ENCODE measurements at regions of chr4 and their contacts with region 1.

Region 1: GRCh38 chr4:2963175-2963965 is at the starts of genes GRK4 and NOP14:
- DNase-seq: peak; percentile 96 to 98
- ATAC-seq: peak; percentile 83 to 91
- H3K4me3 ChIP-seq: peak within 1 kb of the TSS; percentile 78 to 99 (median 86)
- H3K27ac ChIP-seq: peak within 1 kb of the TSS; percentile 91 to 95 (median 94)
- H3K4me1 ChIP-seq: peaks cover 25 to 28% of the 10 kb centered on the region in 2 donors
- H3K27me3 ChIP-seq: no peaks in the 10 kb centered on the region
- CTCF ChIP-seq: peak in 2 of 5 experiments; percentile 24 to 48
- POLR2A ChIP-seq: peak; percentile 85 to 87
- total RNA-seq, gene GRK4: 2.8 to 5.8 (median 3.7) TPM
- total RNA-seq, gene NOP14: 16.6 to 46.2 (median 36.2) TPM

Region 2: DNA sequence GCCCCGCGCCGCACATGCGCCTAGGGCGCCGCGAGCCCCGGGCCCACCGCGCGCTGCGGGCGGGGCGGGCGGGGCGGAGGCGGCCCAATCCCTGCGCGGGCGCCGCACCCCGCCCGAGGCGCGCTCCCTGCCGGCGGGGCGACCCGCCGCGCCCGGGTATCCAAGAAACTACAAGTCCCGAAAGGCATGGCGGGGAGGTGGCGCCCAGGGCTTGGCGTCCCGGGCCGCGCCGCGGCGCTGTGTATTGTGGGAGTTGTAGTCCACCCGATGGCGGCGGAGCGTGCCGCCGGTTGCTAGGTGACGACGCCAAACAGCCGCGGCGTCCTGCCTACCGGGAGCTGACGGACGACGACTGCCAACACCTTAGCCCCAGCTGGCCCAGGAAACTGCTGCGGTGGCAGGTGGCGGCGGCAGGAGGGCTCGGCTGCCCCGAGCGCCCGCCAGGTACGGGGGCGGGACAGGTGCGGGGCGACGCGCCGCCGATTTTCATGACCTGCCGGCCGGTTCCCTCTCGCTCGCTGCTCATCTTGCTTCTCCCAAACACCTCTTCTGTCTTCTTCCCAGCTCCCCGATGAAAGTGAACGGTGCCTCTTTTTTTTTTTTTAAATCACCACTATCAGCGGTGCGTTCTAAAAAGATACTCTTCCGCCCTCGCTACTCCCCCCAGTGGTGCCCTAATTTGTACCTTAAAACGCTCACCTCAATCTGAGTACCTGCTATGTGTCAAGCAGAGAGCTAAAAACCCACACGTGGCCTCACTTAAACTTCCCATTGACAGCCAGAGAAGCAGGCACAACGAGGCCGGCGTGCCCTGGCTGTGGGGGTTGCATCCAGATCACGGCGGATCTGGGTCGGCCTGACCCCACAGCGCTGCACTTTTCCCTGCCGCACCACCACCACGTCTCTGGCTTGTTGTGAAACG is 544.5 kb before region 1 on chr4 and contains the start of gene CFAP99:
- in situ Hi-C with region 1: loop called in 1 of 4 experiments (anchors 10 kb)
- intact Hi-C with region 1: loop called (anchors 1 kb)
- DNase-seq: peak; percentile 97 to 98
- ATAC-seq: peak; percentile 90 to 91
- H3K4me3 ChIP-seq: peak within 1 kb of the TSS; percentile 69 to 94 (median 77)
- H3K27ac ChIP-seq: peak within 1 kb of the TSS; percentile 47 to 79 (median 64)
- H3K4me1 ChIP-seq: peaks cover 16 to 26% of the 10 kb centered on the region in 2 donors
- H3K27me3 ChIP-seq: peaks cover 0 to 23% (median 15%) of the 10 kb centered on the region in 3 donors
- CTCF ChIP-seq: peak in 3 of 5 experiments; percentile 4 to 11 (median 5)
- POLR2A ChIP-seq: no peak
- total RNA-seq, gene CFAP99: not detected

Region 3: GRCh38 chr4:2608291-2608690 is 355.1 kb before region 1 on chr4:
- in situ Hi-C with region 1: no loop called
- intact Hi-C with region 1: no loop called
- DNase-seq: no peak
- ATAC-seq: no peak
- H3K4me3 ChIP-seq: no peak overlapping the region
- H3K27ac ChIP-seq: no peak overlapping the region
- H3K4me1 ChIP-seq: peaks cover 40 to 62% of the 10 kb centered on the region in 2 donors
- H3K27me3 ChIP-seq: no peaks in the 10 kb centered on the region
- CTCF ChIP-seq: no peak
- POLR2A ChIP-seq: no peak

Region 4: DNA sequence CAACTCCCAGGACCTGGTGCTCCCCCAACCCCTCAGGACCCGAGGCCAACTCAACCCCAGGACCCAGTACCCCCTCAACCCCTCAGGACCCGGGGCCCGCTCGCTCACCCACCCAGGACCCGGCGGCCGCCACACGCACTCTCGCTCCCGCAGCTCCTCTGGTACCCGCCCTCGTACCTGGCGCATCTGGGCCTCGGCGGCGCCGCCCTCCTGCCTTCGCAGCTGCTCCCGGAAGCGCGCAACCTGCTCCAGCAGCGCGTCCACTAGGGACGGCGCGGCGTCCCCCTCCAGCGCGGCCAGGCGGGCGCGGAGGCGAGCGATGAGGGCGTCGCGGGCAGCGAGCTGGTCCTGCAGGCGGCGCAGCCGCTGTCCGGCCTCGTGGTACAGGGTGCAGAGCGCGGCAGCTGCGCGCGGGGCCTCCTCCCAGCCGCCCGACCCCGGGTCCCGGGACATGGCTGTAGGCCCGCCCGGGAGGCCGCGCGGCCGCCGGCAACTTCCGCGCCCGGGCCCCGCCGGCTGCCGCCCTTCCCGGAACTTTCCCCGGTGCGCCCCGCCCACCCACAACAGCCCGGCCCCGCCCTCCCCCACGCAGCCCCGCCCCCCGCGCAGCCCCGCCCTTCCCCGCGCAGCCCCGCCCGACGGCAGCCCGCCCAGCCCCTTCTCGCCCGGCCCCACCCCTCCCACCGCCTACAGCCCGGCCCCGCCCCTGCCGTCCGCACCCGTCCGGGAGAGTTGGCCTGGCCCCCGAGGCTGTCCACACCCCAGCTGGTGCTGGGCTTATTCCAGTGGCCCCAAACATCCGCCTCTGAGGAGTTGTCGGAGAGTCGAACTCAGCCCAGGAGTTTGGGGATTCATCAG is 207.3 kb before region 1 on chr4 and contains the start of gene TNIP2:
- in situ Hi-C with region 1: no loop called
- intact Hi-C with region 1: loop called (anchors 2 kb)
- DNase-seq: peak; percentile 77
- ATAC-seq: peak; percentile 72 to 85
- H3K4me3 ChIP-seq: peak within 1 kb of the TSS; percentile 68 to 91 (median 81)
- H3K27ac ChIP-seq: peak within 1 kb of the TSS; percentile 72 to 87 (median 84)
- H3K4me1 ChIP-seq: peaks cover 12 to 19% of the 10 kb centered on the region in 2 donors
- H3K27me3 ChIP-seq: no peaks in the 10 kb centered on the region
- CTCF ChIP-seq: peak in 4 of 5 experiments; percentile 47 to 65 (median 56)
- POLR2A ChIP-seq: peak; percentile 62 to 79
- total RNA-seq, gene TNIP2: 36.1 to 81.9 (median 66.5) TPM

Region 5: DNA sequence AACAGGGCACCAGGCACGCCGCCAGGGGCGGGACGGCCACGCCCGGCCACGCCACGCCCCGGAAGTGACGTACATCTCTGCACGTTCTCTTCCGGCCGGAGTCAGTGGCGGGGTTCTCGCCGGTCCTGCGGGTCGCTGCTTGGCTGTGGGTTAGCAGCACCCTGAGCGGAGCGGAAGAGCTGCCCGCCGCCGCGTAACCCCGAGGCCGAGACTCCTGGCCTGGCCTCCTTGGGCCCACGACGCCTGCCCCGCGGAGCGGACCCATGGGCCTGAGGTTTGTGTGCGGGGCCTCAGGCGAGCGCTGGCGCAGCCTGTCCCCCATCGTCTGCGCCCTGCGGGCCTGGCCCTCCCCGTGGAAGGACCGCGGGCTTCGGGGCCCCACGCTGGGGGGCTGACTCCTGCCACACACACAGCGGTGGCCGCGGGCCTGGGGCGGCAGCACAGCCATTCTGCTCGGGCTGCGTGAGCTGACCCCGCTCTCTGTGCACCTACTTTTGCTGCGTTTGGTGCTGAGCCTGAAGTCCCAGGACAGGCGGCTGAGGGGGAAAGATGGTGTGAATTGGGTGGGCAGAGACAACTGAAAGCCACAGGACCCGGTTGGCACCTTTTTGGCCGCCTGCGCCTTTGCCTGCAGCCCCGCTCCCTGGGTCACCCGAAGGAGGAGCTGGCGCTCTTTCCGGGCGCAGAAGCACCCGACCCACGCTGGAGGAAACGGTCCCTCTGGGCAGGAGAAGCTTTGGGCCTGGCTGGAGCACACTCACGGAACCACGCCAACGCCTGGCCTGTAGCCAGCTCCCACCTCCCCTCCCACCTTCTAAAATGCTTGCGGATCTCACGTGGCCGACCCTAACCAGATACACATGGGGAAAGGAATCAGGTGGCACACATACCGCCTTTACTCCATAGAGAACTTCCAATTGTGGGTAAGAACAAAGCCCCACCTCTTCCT is 28.3 kb before region 1 on chr4:
- in situ Hi-C with region 1: no loop called
- intact Hi-C with region 1: loop called (anchors 1 kb)
- DNase-seq: peak; percentile 89 to 92
- ATAC-seq: peak; percentile 77 to 83
- H3K4me3 ChIP-seq: peak overlapping the region; percentile 75 to 98 (median 94)
- H3K27ac ChIP-seq: peak overlapping the region; percentile 86 to 98 (median 94)
- H3K4me1 ChIP-seq: peaks cover 29 to 30% of the 10 kb centered on the region in 2 donors
- H3K27me3 ChIP-seq: no peaks in the 10 kb centered on the region
- CTCF ChIP-seq: no peak
- POLR2A ChIP-seq: peak; percentile 90 to 95

Region 6: GRCh38 chr4:3074078-3074795 is 110.9 kb after region 1 on chr4 and contains the starts of genes HTT and HTT-AS:
- in situ Hi-C with region 1: no loop called
- intact Hi-C with region 1: loop called (anchors 1 kb)
- DNase-seq: peak; percentile 95
- ATAC-seq: peak; percentile 87 to 92
- H3K4me3 ChIP-seq: peak within 1 kb of the TSS; percentile 74 to 90 (median 80)
- H3K27ac ChIP-seq: peak within 1 kb of the TSS; percentile 86 to 100 (median 96)
- H3K4me1 ChIP-seq: peaks cover 19 to 36% of the 10 kb centered on the region in 2 donors
- H3K27me3 ChIP-seq: no peaks in the 10 kb centered on the region
- CTCF ChIP-seq: no peak
- POLR2A ChIP-seq: peak; percentile 46 to 63
- total RNA-seq, gene HTT: 23.5 to 73.0 (median 51.1) TPM
- total RNA-seq, gene HTT-AS: not detected